Panc1 (cell line): ENCODE measurements at regions of chr5 and their contacts with region 1.

Region 1: DNA sequence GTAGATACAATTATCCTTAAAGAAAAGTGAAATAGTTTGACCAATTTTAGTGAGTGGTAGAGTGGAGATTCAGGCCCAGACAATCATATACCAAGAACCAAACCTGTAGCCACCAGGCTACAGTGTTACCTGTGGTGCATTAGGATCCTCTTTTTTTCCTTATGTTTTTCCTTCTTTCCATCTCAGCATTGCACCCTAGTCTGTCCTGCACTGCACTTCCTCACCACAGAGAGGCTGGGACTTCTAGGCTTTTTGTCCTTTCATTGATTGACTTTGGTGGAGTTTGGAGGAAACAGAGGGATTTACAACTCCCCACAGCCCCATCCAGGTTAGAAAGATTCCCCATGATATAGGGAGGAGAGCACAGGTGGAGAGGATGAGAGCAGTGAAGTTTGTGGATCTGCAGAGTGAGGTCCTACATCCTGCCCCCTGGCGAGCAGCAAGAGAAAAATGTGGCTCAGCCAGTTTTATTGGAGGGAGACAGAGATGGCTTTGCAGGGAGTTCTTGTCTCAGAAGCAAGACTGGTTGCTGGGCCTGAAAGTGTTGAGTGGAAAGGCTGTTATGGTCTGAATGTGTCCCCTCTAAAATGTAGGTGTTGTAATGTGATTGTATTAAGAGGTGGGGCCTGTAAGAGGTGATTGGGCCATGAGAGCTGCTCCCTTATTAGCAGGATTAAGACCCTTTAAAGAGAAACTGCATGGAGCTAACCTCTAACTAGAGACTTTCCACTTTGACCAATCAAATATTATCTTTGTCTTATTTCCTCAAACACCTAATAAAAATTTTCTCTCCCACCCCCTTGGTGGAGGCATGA is 36.2 kb downstream of the KIF4B start:
- DNase-seq: no peak
- ATAC-seq: 0 out of 2 replicates have a peak, but pooled peaks have one; percentile 54
- H3K4me3 ChIP-seq: no peak overlapping the region
- H3K27ac ChIP-seq: no peak overlapping the region
- H3K4me1 ChIP-seq: no peaks in the 10 kb centered on the region
- H3K27me3 ChIP-seq: peaks cover 6% of the 10 kb centered on the region
- CTCF ChIP-seq: peak; percentile 53

Region 2: DNA sequence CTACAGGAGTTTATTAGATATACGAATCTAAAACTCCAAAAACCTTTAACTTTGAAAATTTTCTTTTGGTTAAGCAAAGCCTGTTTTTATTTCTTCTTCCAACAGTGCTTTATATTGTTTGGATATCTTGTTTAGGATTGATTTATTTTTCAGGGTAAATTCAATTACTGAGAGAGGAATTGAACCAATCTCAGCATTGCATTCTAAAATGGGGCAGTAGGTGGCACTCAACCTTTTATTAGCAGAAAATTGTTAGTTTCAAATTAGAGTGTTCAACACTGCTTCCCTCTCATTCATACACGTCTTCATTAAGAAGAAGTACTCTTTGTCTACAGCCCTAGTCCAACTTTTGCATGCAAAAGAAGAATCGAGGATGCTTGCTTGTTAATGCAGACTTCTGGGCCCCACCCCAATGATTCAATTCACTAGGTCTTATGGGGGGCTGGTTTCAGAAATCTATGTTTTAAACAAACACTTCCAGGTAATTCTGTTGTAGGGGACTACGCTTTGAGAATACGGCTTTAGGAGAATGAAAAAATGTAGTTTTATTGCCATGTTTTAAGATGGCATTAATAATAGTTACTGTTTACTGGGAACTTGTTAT is 82.3 kb before region 1 on chr5:
- CTCF ChIA-PET with region 1: no interaction called
- POLR2A ChIA-PET with region 1: interaction called, 11 read pairs
- in situ Hi-C with region 1: no loop called
- intact Hi-C with region 1: no loop called
- DNase-seq: no peak
- ATAC-seq: no peak
- H3K4me3 ChIP-seq: no peak overlapping the region
- H3K27ac ChIP-seq: no peak overlapping the region
- H3K4me1 ChIP-seq: no peaks in the 10 kb centered on the region
- H3K27me3 ChIP-seq: no peaks in the 10 kb centered on the region
- CTCF ChIP-seq: peak; percentile 69

Region 3: DNA sequence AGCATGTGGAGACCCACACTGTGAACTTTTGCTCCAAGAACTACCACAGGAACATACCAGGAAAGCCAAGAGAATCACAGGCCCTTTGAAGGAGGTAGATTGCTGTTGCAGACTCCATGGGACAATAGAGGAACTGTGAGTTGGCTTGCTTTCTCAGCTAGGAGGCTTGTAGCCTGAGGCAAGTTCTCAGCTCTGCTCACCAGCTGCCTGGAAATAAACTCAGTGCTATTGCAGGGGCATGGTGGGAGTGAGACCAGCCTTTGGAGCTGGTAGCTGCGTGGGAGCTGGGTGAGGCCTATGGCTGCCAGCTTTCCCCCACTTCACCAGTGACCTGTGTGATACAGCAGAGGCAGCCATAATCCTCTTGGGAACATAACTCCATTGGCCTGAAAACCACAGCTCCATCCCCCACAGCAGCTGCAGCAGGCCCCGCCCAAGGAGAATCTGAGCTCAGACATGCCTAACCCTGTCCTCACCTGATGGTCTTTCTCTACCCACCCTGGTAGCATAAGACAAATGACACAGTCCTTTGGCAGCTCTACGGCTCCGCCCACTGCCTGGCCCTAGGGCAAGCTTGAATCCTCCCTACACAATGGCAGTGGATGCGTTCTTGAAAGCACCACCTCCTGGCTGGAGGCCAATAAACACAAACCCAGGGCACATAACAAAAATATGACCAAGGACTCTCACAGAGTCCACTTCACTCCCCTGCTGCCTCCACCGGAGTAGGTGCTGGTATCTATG is 353.3 kb after region 1 on chr5:
- CTCF ChIA-PET with region 1: no interaction called
- POLR2A ChIA-PET with region 1: no interaction called
- in situ Hi-C with region 1: no loop called
- intact Hi-C with region 1: no loop called
- DNase-seq: no peak
- ATAC-seq: no peak
- H3K4me3 ChIP-seq: no peak overlapping the region
- H3K27ac ChIP-seq: no peak overlapping the region
- H3K4me1 ChIP-seq: no peaks in the 10 kb centered on the region
- H3K27me3 ChIP-seq: no peaks in the 10 kb centered on the region
- CTCF ChIP-seq: no peak